ENCODE measurements at regions of chr9 and their contacts with region 1.

Region 1: GRCh38 chr9:121992571-121993212 is 100.4 kb downstream of the TTLL11 start:
- DNase-seq: peak; percentile 83
- H3K4me3 Mint-ChIP-seq: no peak overlapping the region
- H3K27ac Mint-ChIP-seq: no peak overlapping the region
- H3K4me1 Mint-ChIP-seq: peaks cover 5% of the 10 kb centered on the region
- H3K27me3 Mint-ChIP-seq: no peaks in the 10 kb centered on the region
- CTCF ChIP-seq: peak; percentile 56

Region 2: DNA sequence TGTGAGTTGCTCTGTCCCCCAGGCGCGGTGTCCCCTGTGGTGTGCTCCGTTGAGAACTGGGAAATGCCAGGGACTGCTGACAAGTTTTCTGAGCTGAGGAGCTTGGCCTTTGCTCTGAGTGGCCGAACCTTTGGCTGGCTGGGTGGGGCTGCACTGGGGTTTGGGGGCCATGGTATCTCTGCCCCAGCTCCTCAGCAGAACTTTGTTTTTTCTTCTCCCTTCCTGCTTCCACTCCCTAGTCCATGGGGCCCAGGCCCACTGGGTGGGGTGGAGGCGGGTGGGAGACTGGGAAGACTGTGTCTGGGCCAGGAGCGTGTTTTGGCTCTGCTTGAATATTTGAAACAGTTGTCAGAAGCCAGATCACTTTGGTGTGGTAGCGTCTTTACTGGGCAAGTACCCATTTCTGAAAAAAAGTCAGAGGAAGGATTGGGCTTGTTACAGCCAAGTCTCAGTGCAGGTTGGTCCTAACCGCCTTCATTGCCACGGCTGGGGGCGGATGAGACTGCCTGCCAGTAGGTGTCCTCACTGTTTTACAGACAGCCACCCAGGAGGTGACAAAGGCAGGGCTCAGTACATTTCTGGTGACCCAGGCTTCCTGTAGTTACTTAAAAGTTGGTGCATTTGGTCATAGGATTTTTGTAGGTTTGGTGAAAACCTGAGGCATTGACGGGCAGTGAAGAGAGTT is 248.5 kb before region 1 on chr9:
- CTCF ChIA-PET with region 1: interaction called, 6 read pairs
- POLR2A ChIA-PET with region 1: interaction called, 3 read pairs
- intact Hi-C with region 1: loop called (anchors 1 kb)
- DNase-seq: peak; percentile 40
- H3K4me3 Mint-ChIP-seq: no peak overlapping the region
- H3K27ac Mint-ChIP-seq: no peak overlapping the region
- H3K4me1 Mint-ChIP-seq: peaks cover 14% of the 10 kb centered on the region
- H3K27me3 Mint-ChIP-seq: no peaks in the 10 kb centered on the region
- CTCF ChIP-seq: no peak

Region 3: DNA sequence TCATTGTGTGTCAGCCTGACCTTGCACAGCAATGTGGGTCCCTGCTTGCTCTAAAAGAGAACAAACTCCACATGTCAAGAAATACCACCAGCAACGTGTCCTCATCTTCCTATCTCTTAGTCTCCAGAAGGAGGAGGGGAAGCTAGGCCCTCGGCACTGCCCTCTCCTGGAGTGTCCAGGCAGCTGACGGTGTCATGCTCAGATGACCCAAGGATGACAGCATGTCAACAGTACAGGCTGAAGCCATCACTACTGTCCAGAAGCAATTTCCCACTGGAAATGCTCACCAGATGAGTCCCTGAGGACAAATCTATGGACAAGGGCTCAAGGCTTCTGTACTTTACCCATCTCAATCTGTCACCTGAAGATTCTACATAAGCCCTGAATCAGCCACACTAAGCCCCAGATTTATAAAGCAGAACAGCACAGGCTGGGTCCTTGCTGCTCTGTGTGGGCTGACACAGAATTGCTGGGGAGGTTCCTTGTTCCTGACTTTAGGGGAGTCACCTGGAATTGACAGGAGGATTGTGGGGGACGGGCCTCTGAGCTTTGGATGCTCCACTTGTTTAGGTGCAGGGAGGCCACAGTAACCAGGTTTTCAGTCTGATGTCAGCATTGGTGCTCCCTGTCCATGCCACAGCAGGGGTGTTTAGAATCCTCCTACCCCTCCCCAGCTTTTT is 131.1 kb before region 1 on chr9:
- CTCF ChIA-PET with region 1: no interaction called
- POLR2A ChIA-PET with region 1: no interaction called
- intact Hi-C with region 1: loop called (anchors 5 kb)
- DNase-seq: peak; percentile 44
- H3K4me3 Mint-ChIP-seq: no peak overlapping the region
- H3K27ac Mint-ChIP-seq: no peak overlapping the region
- H3K4me1 Mint-ChIP-seq: no peaks in the 10 kb centered on the region
- H3K27me3 Mint-ChIP-seq: no peaks in the 10 kb centered on the region
- CTCF ChIP-seq: peak; percentile 29

Region 4: DNA sequence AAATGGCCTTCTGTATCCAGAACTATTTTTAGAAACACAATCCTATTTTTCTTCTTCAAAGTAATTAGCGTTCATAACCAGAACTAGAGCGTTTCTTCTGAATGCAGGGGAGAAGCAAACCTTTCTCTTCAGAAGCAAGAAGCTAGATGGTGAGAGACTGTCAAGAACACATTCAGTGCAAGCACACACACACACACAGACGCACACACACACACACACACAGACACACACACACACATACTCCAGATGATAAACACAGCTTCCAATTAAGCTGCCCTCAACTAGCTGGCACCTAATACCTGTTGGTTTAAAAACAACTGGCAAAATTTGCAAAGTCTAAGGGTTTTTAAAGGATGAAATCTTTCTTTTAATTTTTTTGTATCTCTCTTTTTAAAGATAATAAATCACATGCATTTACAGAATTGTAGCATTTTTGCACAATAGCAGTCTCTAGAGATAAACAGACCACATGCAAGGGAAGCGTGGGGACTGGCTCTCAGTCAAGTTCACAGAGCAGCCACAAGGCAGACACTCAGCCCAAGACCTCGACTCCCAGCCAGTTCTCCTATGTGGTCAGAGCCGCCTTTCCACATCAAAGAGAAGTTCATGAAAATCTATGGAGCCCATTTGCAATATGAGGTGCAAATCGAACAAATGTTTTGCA is 38.1 kb before region 1 on chr9:
- CTCF ChIA-PET with region 1: no interaction called
- POLR2A ChIA-PET with region 1: no interaction called
- intact Hi-C with region 1: no loop called
- DNase-seq: no peak
- H3K4me3 Mint-ChIP-seq: no peak overlapping the region
- H3K27ac Mint-ChIP-seq: no peak overlapping the region
- H3K4me1 Mint-ChIP-seq: peaks cover 27% of the 10 kb centered on the region
- H3K27me3 Mint-ChIP-seq: no peaks in the 10 kb centered on the region
- CTCF ChIP-seq: no peak

Region 5: GRCh38 chr9:122168356-122168755 is 175.7 kb after region 1 on chr9:
- CTCF ChIA-PET with region 1: no interaction called
- POLR2A ChIA-PET with region 1: no interaction called
- intact Hi-C with region 1: no loop called
- DNase-seq: no peak
- H3K4me3 Mint-ChIP-seq: no peak overlapping the region
- H3K27ac Mint-ChIP-seq: no peak overlapping the region
- H3K4me1 Mint-ChIP-seq: peaks cover 7% of the 10 kb centered on the region
- H3K27me3 Mint-ChIP-seq: peaks cover 57% of the 10 kb centered on the region
- CTCF ChIP-seq: no peak

Measured in MCF 10A (cell line).